Activated CD8-positive, alpha-beta memory T cell treated with anti-CD3 and anti-CD28 coated beads, Interleukin-2, amount 10 ng/mL, durations not matched to agents 7 days and 5 days (primary cell): ENCODE measurements at regions of chr5 and their contacts with region 1.

Region 1: DNA sequence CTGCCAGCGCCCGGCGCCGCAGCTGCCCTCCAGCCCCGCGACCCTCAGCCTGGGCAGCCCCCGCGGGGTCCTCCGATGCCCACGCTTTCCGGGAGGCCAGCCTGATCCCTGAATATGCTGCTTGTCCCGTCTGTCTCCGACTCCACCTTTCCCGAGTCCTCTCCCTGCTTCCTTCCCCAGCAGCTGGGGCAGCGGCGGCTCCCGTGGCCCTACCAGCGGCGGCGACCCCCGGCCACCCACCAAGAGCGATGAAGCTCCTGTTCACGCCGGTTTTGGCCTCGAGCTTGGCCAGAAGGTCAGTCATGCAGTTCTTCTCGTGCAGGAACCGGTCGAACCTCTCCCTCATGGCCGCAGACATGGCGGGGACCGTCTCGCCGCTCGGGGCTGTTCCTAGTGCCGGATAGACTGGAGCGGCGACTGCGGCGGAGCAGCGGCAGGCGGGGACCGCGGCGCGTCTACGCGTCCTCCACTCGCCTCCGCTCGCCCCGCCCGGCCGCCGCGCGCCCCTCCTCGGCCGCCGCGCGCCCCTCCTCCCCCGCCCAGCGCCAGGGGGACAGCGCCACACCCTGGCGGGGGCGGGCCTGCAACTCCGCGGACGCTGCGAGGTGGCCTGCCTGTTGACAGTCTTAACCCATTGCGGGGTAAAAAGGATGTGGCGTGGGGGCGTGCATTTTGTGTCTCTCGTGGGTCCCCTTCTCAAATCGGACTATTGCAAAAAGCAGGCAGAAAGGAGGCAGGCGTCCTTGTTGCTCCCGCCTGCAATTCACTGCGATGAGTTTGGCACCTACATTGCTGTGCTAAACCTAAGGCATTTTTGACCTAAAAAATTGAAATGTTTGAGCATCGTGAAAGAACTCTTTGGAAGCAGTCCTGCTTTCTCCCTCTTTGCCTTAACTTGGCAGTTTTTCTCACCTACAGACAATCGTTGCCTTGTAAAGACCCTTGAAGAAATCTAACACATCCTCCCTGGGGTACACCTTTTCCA is at the start of gene REEP5:
- DNase-seq: peak; percentile 91
- ATAC-seq: peak; percentile 80
- H3K4me3 Mint-ChIP-seq: peak within 1 kb of the TSS; percentile 95
- H3K27ac Mint-ChIP-seq: peak within 1 kb of the TSS; percentile 98
- H3K4me1 Mint-ChIP-seq: peaks cover 68% of the 10 kb centered on the region
- H3K27me3 Mint-ChIP-seq: no peaks in the 10 kb centered on the region
- total RNA-seq, gene REEP5: 91.0 to 97.0 TPM

Region 2: DNA sequence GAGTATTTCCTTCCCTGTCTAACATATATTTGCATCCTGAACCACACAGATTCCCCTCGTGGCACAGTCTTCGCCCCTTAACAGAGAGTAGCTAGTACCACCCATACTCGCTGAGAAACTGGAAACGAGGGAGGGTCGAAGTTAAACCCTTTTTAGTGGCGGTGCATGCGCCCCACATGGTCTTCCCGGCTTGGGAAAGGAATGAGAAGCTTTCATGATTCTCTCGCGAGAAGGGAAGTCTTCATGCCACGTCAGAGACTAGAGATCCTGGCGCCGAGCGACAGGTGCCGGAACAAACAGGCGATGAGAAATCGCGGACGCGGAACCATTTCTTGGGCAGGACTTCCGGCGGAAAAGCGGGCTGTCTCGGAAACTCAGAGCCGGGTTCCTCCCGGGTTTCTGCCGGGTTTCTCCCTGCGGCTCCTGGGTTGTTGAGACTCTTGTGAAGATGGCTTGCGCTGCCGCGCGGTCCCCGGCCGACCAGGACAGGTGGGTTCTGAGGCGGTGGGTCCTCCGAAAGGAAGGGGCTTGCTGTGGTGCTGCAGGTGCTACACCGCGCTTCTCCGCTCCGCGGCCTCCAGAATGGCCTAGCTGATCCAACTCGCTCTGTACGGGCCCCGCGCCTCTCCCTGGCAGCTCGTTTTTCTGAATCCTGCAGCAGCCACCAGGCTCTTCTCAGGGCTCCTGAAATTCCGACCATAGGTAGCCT is 61.0 kb before region 1 on chr5 and contains the start of gene SRP19:
- CTCF ChIA-PET with region 1: interaction called, 11 read pairs
- DNase-seq: peak; percentile 96
- ATAC-seq: peak; percentile 97
- H3K4me3 Mint-ChIP-seq: peak within 1 kb of the TSS; percentile 97
- H3K27ac Mint-ChIP-seq: peak within 1 kb of the TSS; percentile 89
- H3K4me1 Mint-ChIP-seq: peaks cover 41% of the 10 kb centered on the region
- H3K27me3 Mint-ChIP-seq: peaks cover 13% of the 10 kb centered on the region
- total RNA-seq, gene SRP19: 50.1 to 55.9 TPM

Region 3: DNA sequence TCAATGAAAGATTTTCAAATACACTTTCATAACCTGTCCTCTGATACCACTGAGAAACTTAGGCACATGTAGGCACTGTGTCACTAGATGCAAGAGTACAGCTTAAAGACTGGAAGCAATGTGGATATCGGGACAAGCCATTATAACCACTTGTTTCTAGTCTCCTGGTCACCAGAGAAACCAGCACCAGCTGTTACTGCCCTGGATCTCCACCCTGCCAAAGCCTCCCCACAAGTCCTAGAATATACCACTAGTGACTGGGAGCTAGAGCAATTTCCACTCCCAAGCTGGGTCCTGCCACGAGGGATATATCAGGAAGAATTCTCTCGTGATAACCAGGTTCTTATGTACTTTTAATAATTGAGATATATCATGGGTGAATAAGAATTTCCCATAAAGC is 19.6 kb before region 1 on chr5:
- CTCF ChIA-PET with region 1: interaction called, 12 read pairs
- DNase-seq: no peak
- ATAC-seq: no peak
- H3K4me3 Mint-ChIP-seq: no peak overlapping the region
- H3K27ac Mint-ChIP-seq: no peak overlapping the region
- H3K4me1 Mint-ChIP-seq: peaks cover 8% of the 10 kb centered on the region
- H3K27me3 Mint-ChIP-seq: no peaks in the 10 kb centered on the region

Region 4: DNA sequence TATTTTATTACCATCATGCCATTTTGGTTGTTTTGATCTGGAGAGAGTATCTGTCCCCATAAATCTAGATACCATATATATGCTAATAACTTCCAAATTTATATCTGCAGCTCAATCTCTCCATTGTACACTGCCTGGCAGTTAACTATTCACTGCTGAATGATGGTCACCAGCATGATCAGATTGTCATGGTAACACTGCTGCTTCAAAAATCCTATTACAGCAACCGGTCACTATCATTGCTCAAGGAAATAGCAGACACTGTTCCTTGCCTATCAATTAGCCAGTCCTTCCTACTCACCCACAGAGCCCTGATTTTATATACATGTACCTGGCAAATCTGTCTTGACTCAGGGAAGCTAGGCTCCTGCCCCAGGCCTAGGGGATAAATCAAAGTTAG is 11.6 kb before region 1 on chr5:
- CTCF ChIA-PET with region 1: interaction called, 15 read pairs
- DNase-seq: no peak
- ATAC-seq: no peak
- H3K4me3 Mint-ChIP-seq: no peak overlapping the region
- H3K27ac Mint-ChIP-seq: no peak overlapping the region
- H3K4me1 Mint-ChIP-seq: peaks cover 33% of the 10 kb centered on the region
- H3K27me3 Mint-ChIP-seq: no peaks in the 10 kb centered on the region

Region 5: DNA sequence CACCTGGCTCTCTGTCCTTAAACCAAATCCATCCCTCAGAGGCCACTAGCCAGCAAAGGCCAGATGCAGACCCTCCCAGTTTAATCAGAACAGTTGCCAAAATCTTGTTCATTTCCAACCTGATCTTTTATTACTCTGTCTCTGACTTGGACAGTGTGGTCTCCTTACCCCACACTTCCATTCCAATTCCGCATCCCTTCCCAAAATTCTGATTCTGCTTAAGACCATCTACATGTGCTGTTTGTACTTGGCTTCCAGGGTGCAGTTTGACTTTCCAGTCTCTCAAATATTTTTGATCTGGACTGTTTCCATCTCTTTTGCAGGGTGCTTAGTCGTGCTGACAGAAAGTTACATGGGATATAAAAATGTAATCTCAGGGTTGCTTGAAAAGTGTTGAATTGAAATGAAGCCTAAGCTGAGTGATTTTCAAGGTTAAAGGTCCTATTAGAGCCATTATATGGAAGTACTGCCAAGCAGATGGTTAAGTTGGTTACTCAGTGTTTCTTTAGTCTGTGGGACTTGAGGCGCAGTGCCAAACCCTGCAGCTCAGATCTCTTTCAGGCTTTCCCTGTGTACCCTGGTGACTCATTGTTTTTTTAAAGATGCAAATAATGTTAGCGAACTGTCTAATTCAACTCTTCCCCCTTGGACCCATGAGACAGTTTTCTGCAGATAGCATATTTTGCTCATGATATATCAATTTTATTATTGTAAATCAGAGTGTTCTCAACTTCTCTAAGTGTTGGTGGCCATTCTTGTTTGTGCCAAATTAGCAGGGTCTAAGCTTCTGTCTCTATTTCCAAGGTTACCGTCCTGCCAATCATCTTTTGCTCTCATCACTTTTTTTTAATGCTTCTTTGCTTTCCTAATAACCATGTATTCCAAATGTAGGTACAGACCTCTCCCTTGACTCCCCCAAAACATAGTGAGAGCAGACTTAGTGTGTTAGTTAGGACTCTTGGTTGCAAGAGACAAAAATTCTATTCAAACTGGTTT is 36.3 kb after region 1 on chr5:
- CTCF ChIA-PET with region 1: interaction called, 70 read pairs
- DNase-seq: no peak
- ATAC-seq: peak; percentile 65
- H3K4me3 Mint-ChIP-seq: no peak overlapping the region
- H3K27ac Mint-ChIP-seq: peak overlapping the region; percentile 2
- H3K4me1 Mint-ChIP-seq: peaks cover 48% of the 10 kb centered on the region
- H3K27me3 Mint-ChIP-seq: peaks cover 6% of the 10 kb centered on the region

Region 6: DNA sequence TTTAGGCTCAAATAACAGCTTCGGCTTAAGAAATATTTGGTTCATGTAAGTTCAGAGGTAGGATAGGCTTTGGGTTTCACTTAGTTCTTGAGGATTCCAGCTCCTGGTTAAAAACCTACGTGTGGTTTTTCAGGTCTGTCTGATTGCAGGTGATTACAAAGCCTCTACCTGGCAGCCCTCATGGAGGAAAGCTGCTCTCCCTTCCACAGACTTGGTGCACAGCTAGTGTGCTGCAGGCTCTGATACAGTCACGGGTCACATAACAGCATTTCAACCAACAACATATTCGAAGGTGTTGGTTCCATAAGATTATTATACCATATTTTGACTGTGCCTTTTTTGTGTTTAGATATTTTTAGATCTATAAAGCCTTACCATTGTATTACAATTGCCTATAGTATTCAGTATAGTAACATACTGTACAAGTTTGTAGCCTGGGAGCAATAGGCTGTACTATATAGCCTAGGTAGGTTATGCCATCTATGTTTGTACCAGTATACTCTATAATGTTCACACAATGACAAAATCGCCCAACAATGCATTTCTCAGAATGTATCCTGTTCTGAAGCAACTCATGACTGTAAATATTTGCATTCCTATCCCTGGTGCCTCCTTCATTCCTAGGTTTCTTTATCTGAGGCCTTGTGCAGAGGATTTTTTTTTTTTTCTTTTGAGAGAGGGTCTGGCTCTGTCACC is 46.4 kb after region 1 on chr5:
- CTCF ChIA-PET with region 1: interaction called, 70 read pairs
- DNase-seq: no peak
- ATAC-seq: no peak
- H3K4me3 Mint-ChIP-seq: no peak overlapping the region
- H3K27ac Mint-ChIP-seq: peak overlapping the region; percentile 18
- H3K4me1 Mint-ChIP-seq: peaks cover 35% of the 10 kb centered on the region
- H3K27me3 Mint-ChIP-seq: no peaks in the 10 kb centered on the region

Region 7: GRCh38 chr5:112976432-112977309 is 54.5 kb after region 1 on chr5 and contains the start of gene DCP2:
- CTCF ChIA-PET with region 1: interaction called, 26 read pairs
- DNase-seq: peak; percentile 98
- ATAC-seq: peak; percentile 98
- H3K4me3 Mint-ChIP-seq: peak within 1 kb of the TSS; percentile 96
- H3K27ac Mint-ChIP-seq: peak within 1 kb of the TSS; percentile 99
- H3K4me1 Mint-ChIP-seq: peaks cover 43% of the 10 kb centered on the region
- H3K27me3 Mint-ChIP-seq: no peaks in the 10 kb centered on the region
- total RNA-seq, gene DCP2: 90.4 to 108 TPM